CD4-positive, alpha-beta T cell (primary cell): ENCODE measurements at regions of chr2 and their contacts with region 1.

Region 1: GRCh38 chr2:21194858-21195271 is 71.1 kb downstream of the TDRD15 start:
- DNase-seq: no peak
- ATAC-seq: no peak
- H3K4me3 ChIP-seq: no peak overlapping the region
- H3K4me3 Mint-ChIP-seq: no peak overlapping the region
- H3K27ac ChIP-seq: no peak overlapping the region
- H3K27ac Mint-ChIP-seq: no peak overlapping the region
- H3K4me1 ChIP-seq: no peaks in the 10 kb centered on the region
- H3K4me1 Mint-ChIP-seq: no peaks in the 10 kb centered on the region
- H3K27me3 ChIP-seq: no peaks in the 10 kb centered on the region
- H3K27me3 Mint-ChIP-seq: no peaks in the 10 kb centered on the region
- CTCF ChIP-seq: no peak

Region 2: DNA sequence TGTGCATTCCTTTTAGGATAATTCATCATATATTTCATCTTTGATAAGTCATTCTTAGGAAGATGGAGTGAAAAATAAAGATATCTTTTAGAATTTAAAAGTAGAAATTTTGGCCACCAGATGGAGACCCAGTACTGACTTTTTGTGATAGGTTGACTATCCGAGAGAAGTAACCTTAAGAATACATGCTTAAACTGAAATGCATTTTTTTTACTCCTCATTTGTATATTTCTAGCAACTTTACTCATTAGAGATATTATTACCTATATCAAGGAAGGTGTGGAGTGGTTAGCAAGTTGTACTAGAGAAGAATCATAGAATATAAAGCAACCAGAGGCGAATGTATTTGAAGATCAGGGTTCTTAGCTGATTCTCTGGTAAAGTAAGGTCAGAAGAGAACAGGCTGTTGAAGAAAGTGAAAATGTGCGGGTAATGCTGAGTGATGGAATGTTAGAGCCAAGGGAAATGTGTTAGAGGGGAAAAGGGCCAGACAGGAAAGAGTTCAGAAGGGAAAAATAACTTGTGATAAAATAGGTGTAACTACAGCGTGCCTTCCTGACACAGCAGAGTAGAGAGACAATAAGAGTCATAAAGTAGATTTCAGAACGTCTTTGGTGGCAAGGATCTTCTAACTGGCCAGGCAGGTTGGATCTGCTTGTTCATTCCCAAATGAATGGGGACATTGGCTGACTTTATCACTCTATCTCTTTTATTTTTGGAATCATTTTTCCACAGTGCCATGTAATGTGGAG is 18.8 kb before region 1 on chr2:
- CTCF ChIA-PET with region 1: no interaction called
- POLR2A ChIA-PET with region 1: no interaction called
- intact Hi-C with region 1: loop called in 1 of 2 experiments (anchors 1 kb)
- DNase-seq: no peak
- ATAC-seq: no peak
- H3K4me3 ChIP-seq: no peak overlapping the region
- H3K4me3 Mint-ChIP-seq: no peak overlapping the region
- H3K27ac ChIP-seq: no peak overlapping the region
- H3K27ac Mint-ChIP-seq: no peak overlapping the region
- H3K4me1 ChIP-seq: no peaks in the 10 kb centered on the region
- H3K4me1 Mint-ChIP-seq: no peaks in the 10 kb centered on the region
- H3K27me3 ChIP-seq: no peaks in the 10 kb centered on the region
- H3K27me3 Mint-ChIP-seq: no peaks in the 10 kb centered on the region
- CTCF ChIP-seq: no peak